ENCODE measurements at regions of chr6 and their contacts with region 1.

Region 1: DNA sequence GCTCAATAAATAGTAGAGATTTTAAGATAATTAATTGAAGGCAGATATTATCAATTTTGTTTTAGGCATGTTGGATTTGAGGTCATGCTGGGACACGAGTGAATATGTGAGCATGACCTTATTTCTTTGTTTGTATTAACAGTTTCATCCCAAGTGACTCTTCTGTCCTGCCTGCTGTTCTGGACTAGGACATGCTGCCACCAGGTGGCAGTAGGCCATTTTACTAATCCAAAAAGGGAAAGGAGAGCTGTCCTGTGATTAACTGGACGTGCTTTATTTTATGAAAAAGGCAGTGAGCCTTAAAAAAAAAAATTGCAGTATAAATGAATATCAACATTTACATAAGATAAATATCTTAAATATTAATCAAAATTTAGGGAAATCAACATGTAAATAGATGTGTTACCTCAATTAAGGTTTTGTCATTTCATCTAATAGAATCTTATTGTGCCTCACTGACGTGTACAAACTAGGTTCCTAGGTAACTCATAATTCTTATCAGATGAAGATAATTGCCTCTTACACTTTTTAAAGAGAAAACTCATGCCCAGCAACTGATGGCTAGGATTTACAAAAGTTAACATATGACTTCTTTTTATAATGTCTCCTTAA is 49.8 kb downstream of the FRK start:
- DNase-seq: peak; percentile 63 to 65
- H3K4me3 ChIP-seq: no peak overlapping the region
- H3K27ac ChIP-seq: peak overlapping the region; percentile 41
- H3K4me1 ChIP-seq: peaks cover 41% of the 10 kb centered on the region
- H3K27me3 ChIP-seq: no peaks in the 10 kb centered on the region
- CTCF ChIP-seq: peak; percentile 97

Region 2: DNA sequence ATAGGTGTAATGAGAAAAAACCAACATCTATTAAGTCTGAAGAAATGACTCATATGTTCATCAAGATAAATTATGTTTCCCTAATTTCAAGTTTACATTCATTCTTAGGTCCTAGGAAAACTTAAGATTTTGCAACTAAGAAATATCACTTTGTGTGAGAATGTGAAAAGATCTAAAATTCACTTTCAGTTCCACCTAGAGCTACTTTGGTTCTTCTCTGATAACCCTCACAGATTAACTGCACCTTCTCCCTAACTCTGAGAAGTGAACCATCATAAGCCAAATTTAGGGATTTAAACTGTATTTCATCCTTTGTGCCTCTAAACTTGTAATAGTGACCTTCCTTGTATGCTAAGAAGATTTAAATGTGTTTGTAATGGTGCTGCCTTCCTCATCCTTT is 163.2 kb before region 1 on chr6:
- CTCF ChIA-PET with region 1: no interaction called
- POLR2A ChIA-PET with region 1: no interaction called
- intact Hi-C with region 1: no loop called
- DNase-seq: no peak
- H3K4me3 ChIP-seq: no peak overlapping the region
- H3K27ac ChIP-seq: no peak overlapping the region
- H3K4me1 ChIP-seq: no peaks in the 10 kb centered on the region
- H3K27me3 ChIP-seq: 0 out of 2 replicates have a peak, but pooled peaks cover 5% of the 10 kb centered on the region
- CTCF ChIP-seq: no peak

Region 3: DNA sequence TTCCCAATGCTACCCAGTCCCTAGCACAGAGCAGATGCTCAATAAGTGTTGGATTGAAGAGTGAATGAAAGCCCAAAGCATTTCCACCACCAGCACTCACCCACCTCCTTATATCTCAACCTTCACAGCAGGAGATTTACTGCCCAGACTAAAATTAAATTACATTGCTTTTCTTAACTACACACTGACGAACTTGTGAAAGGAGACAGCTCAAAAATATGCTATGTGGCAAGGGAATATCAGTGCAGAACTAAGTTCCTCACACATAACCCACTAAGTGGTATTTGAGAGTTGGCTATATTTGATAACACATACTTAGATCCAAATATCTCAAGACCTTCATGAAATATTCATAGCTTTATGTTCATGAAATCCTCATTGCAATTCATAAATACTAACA is 87.9 kb before region 1 on chr6:
- CTCF ChIA-PET with region 1: no interaction called
- POLR2A ChIA-PET with region 1: no interaction called
- intact Hi-C with region 1: no loop called
- DNase-seq: no peak
- H3K4me3 ChIP-seq: no peak overlapping the region
- H3K27ac ChIP-seq: no peak overlapping the region
- H3K4me1 ChIP-seq: no peaks in the 10 kb centered on the region
- H3K27me3 ChIP-seq: no peaks in the 10 kb centered on the region
- CTCF ChIP-seq: no peak

Region 4: GRCh38 chr6:116034327-116034726 is 23.4 kb after region 1 on chr6:
- CTCF ChIA-PET with region 1: no interaction called
- POLR2A ChIA-PET with region 1: no interaction called
- intact Hi-C with region 1: loop called (anchors 2 kb)
- DNase-seq: no peak
- H3K4me3 ChIP-seq: no peak overlapping the region
- H3K27ac ChIP-seq: peak overlapping the region; percentile 62
- H3K4me1 ChIP-seq: peaks cover 36% of the 10 kb centered on the region
- H3K27me3 ChIP-seq: no peaks in the 10 kb centered on the region
- CTCF ChIP-seq: no peak

Region 5: DNA sequence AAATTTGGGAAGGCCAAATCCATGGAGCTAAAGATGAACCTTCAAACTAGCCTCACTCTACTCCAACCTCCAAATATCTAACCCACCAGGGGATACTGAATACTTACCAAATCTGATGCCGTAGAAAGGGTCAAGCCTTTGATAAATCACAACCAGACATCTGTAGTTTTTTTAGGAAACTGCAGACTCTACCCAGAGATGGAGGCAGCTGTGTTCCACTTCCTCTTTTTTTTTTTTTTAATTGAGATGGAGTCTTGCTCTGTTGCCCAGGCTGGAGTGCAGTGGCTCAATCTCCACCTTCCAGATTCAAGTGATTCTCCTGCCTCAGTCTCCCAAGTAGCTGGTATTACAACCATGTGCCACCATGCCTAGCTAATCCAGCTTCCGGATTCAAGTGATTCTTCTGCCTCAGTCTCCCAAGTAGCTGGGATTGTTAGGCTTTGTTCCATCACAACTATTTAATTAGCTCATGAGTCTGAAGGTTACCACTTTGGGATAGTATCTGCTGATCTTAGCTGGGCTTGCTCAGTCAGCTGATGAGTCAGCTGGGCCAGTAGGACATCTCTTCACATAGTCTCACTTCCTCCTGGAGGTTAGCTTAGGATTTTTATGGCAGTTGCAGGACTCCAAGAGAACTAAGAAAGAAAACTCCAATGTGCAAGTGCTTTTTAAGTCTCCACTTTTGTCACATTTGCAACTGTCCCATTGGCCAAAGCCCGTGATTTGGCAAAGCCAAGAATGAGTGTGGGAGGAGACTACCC is 36.5 kb after region 1 on chr6:
- CTCF ChIA-PET with region 1: no interaction called
- POLR2A ChIA-PET with region 1: no interaction called
- intact Hi-C with region 1: no loop called
- DNase-seq: no peak
- H3K4me3 ChIP-seq: no peak overlapping the region
- H3K27ac ChIP-seq: no peak overlapping the region
- H3K4me1 ChIP-seq: no peaks in the 10 kb centered on the region
- H3K27me3 ChIP-seq: no peaks in the 10 kb centered on the region
- CTCF ChIP-seq: no peak

Region 6: DNA sequence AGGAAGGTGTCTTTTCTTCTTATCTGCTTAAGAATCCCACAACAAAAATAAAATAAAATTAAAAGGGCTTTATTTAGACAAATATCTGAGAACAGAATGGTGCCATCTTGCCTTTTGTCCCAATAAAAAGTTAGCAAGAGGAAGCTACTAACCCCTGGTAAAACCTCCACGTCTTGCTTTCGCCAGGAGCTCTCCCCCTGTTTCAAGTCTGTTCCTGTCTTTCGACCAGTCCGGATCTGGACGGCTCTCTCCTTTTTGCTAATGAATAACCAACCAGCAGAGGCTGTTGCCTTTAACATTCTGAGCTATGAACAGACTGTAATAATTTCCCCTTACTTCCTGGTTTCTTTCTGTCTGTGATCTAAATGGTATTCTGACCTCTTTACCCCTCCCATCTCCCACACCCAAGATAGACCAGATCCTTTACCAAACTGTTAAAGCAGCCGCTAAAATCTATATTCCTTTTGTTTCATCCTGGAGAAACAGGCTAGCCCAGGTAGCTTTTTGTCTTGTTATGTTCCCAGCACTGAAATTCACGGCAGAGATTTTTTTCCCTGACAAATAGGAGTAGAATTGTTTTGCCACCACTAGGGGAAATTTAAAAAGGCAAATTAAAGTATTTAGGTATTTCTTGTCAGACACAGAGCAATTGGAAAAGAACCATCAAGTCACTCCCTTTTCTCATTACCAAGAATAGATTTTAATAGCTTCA is 49.8 kb after region 1 on chr6 and contains the start of gene FRK:
- CTCF ChIA-PET with region 1: interaction called, 23 read pairs
- POLR2A ChIA-PET with region 1: interaction called, 3 read pairs
- intact Hi-C with region 1: loop called (anchors 1 kb)
- DNase-seq: peak; percentile 58 to 93
- H3K4me3 ChIP-seq: peak within 1 kb of the TSS; percentile 64
- H3K27ac ChIP-seq: peak within 1 kb of the TSS; percentile 91
- H3K4me1 ChIP-seq: peaks cover 44% of the 10 kb centered on the region
- H3K27me3 ChIP-seq: no peaks in the 10 kb centered on the region
- CTCF ChIP-seq: peak; percentile 68
- total RNA-seq, gene FRK: 14.4 and 17.2 TPM in 2 replicates

Region 7: DNA sequence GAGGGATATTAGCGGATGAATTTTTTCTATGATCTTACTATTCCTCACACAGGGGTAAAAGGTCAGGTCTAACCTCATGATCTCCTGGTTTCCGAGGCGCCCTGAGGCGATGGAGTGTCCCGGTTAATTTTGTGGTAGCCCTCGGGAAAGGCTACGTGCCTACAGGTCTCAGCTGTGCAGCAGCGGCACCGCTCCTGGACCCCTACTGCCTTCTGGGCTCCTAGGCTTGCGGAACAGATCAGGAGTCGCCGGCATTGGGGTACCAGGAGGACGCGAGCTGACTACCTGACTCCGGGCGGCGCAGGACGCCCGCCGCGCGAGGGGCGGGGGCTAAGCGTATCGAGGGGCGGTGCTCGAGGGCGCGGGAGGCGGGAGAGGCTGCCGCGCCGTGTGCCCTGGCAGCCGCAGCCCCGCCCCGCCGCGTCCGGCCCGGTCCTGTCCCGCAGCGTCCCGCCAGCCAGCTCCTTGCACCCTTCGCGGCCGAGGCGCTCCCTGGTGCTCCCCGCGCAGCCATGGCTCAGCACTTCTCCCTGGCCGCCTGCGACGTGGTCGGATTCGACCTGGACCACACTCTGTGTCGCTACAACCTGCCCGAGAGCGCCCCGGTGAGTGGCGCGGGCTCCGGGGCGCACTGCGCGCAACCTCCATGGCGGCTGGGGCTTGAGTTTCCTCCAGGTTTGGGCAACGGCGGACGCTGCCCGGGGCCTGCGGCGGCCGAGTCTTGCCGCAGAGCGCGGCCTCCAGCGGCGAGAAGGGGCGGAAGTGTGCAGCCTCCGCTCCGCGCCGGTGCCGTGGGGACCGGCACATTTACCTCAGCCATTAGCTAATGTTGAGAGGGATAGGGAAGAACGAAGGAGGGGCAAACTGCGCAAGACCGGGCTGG is 89.8 kb after region 1 on chr6 and contains the start of gene NT5DC1:
- CTCF ChIA-PET with region 1: interaction called, 5 read pairs
- POLR2A ChIA-PET with region 1: interaction called, 15 read pairs
- intact Hi-C with region 1: loop called (anchors 1 kb)
- DNase-seq: peak; percentile 76 to 85
- H3K4me3 ChIP-seq: peak within 1 kb of the TSS; percentile 68
- H3K27ac ChIP-seq: peak within 1 kb of the TSS; percentile 61
- H3K4me1 ChIP-seq: peaks cover 22% of the 10 kb centered on the region
- H3K27me3 ChIP-seq: no peaks in the 10 kb centered on the region
- CTCF ChIP-seq: peak; percentile 61
- total RNA-seq, gene NT5DC1: 33.2 and 33.5 TPM in 2 replicates

Region 8: DNA sequence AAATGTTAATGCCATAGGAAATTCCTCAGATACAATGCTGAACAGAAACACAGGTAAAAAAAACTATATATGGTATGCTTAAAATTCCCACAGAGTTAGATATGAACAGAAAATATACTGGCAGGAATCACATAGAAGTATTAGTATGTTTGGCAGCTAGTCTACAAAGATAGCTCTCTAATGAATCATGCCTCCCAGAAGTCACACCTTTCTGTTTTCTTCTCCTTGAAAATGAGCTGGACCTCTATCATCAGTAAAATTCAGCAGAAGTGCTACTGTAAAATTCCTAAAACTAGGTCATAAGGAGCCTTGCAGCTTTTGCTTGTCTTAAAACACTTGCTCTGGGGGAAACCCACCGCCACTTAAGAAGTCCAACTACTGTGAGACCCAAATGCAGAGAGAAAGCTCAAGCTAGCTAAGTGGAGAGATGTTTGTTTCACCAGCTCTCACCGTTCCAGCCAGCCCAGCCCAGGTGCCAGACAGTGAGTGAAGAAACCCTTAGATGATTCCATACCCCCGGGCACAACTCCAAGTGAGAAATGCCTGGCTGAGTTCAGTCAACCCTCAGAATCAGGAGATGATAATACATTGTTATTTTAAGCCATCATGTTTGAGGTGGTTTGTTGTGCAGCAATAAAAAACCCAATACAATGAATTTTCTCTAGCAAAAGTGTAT is 200.0 kb after region 1 on chr6:
- CTCF ChIA-PET with region 1: no interaction called
- POLR2A ChIA-PET with region 1: no interaction called
- intact Hi-C with region 1: loop called (anchors 5 kb)
- DNase-seq: peak; percentile 70 to 73
- H3K4me3 ChIP-seq: no peak overlapping the region
- H3K27ac ChIP-seq: peak overlapping the region; percentile 53
- H3K4me1 ChIP-seq: peaks cover 20% of the 10 kb centered on the region
- H3K27me3 ChIP-seq: no peaks in the 10 kb centered on the region
- CTCF ChIP-seq: no peak

Measured in PC-9 (cell line).